ENCODE measurements at regions of chr11 and their contacts with region 1.

Region 1: GRCh38 chr11:304915-305843 is 2.4 kb upstream of the IFITM2 start:
- DNase-seq: peak in 6 of 10 donors; percentile 20 to 64 (median 48)
- H3K4me3 ChIP-seq: no peak overlapping the region
- H3K27ac ChIP-seq: peak overlapping the region in 1 of 59 donors; percentile 44
- H3K27me3 ChIP-seq: peaks cover 0 to 17% (median 0%) of the 10 kb centered on the region in 45 donors
- CTCF ChIP-seq: peak in 55 of 56 donors; percentile 33 to 75 (median 60)

Region 2: GRCh38 chr11:342328-342727 is 37.1 kb after region 1 on chr11:
- intact Hi-C with region 1: no loop called
- DNase-seq: peak in 1 of 10 donors; percentile 2
- H3K4me3 ChIP-seq: no peak overlapping the region
- H3K27ac ChIP-seq: peak overlapping the region in 30 of 59 donors; percentile 10 to 67 (median 32)
- H3K27me3 ChIP-seq: peaks cover 0 to 3% (median 0%) of the 10 kb centered on the region in 45 donors
- CTCF ChIP-seq: no peak

Region 3: DNA sequence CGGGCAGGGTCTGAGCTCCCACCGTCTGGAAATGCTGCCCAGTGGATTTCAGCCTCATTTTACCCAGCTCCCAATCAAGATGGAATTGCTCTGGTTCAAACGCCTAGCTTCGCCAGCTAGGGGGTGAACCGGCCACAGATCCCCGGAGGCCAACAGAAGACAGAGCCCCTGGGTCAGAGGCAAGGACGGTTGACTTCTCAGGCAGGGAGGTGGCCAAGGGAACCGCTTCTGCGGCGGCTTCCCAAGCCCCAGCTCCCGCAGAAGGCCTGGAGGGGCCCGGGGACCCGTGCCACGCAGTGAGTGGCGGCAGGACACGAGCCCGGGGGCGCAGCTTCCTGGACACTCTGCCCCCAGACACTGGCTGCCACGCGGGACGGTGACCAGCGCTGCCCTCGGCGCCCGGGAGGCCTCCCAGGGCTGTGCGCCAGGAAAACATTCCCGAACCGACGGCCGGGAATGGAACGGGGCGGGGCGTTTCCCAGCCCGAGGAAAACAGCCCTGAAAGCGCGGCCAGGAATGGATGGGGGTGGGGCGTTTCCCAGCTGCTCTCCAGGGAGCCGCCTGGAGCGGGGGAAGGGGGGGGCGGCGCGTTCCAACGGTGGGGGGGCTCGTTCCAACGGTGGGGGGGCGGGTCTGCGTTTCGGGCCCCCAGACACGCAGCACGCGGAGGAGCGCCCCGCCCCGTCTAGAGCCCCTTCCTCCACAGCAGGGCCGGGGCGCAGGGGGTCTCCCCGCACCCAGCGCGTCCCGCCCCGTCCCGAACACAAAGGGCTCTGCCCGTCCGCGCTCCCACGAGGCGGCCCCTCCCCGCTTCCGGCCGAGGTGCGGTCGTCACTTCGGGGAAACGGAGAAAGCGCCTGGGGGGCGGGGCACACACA is 50.6 kb after region 1 on chr11:
- intact Hi-C with region 1: loop called in 1 of 2 experiments (anchors 5 kb)
- DNase-seq: peak in 5 of 10 donors; percentile 58 to 80 (median 64)
- H3K4me3 ChIP-seq: peak overlapping the region; percentile 3 to 63 (median 45)
- H3K27ac ChIP-seq: peak overlapping the region; percentile 50 to 99 (median 95)
- H3K27me3 ChIP-seq: peaks cover 0 to 6% (median 0%) of the 10 kb centered on the region in 45 donors
- CTCF ChIP-seq: peak in 2 of 56 donors; percentile 8 to 20

Region 4: GRCh38 chr11:369336-370018 is 64.3 kb after region 1 on chr11 and contains the start of gene B4GALNT4:
- intact Hi-C with region 1: no loop called
- DNase-seq: peak in 9 of 10 donors; percentile 57 to 84 (median 69)
- H3K4me3 ChIP-seq: peak within 1 kb of the TSS; percentile 35 to 78 (median 62)
- H3K27ac ChIP-seq: peak within 1 kb of the TSS in 52 of 59 donors; percentile 1 to 97 (median 77)
- H3K27me3 ChIP-seq: no peaks in the 10 kb centered on the region
- CTCF ChIP-seq: no peak
- total RNA-seq, gene B4GALNT4: 81.4 to 330 (median 132) TPM

Region 5: GRCh38 chr11:416757-417621 is 111.8 kb after region 1 on chr11:
- intact Hi-C with region 1: no loop called
- DNase-seq: peak in 1 of 10 donors; percentile 38
- H3K4me3 ChIP-seq: peak overlapping the region in 58 of 59 donors; percentile 19 to 65 (median 44)
- H3K27ac ChIP-seq: peak overlapping the region in 15 of 59 donors; percentile 4 to 71 (median 44)
- H3K27me3 ChIP-seq: peaks cover 0 to 60% (median 31%) of the 10 kb centered on the region in 45 donors
- CTCF ChIP-seq: no peak